HCT116 (cell line): ENCODE measurements at regions of chr5 and their contacts with region 1.

Region 1: DNA sequence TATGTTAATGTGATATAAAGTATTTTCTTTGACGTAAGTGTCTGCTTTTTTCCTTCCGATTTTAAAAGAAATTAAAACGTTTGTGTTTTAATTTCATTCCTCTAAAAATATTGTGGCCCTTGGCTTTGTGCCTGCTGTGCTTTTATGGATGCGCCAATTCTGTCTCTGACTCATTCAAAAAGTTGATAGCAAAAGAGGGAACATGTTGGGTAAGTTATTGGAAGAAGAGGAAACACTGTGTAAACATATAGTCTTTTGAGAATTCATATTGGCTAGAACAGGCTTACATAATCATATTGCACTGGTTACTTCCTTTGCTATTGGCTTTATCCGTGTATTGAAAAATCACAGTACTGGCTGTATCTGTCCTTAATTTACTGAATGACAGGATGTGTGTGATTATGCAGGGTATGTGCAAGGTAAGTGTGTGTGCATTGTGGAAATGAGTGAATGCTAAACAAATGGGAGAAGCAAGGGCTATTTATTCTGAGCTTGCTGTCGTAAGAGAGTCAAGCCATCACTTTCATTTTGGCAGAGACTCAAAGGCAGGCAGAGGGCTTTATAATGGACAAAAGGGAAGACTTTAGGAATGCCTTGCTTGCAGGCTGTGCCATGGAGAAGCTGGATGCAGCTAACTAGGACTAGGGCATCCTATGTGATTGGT is 67.8 kb downstream of the SGCD start:
- DNase-seq: no peak
- ATAC-seq: no peak
- H3K4me3 ChIP-seq: no peak overlapping the region
- H3K27ac ChIP-seq: no peak overlapping the region
- H3K4me1 ChIP-seq: no peaks in the 10 kb centered on the region
- H3K27me3 ChIP-seq: no peaks in the 10 kb centered on the region
- CTCF ChIP-seq: no peak
- POLR2A ChIP-seq: no peak
- RAD21 ChIP-seq: no peak

Region 2: GRCh38 chr5:156367597-156367996 is 27.2 kb before region 1 on chr5:
- CTCF ChIA-PET with region 1: no interaction called
- POLR2A ChIA-PET with region 1: no interaction called
- RAD21 ChIA-PET with region 1: no interaction called
- intact Hi-C with region 1: loop called (anchors 1 kb)
- DNase-seq: no peak
- ATAC-seq: no peak
- H3K4me3 ChIP-seq: no peak overlapping the region
- H3K27ac ChIP-seq: no peak overlapping the region
- H3K4me1 ChIP-seq: no peaks in the 10 kb centered on the region
- H3K27me3 ChIP-seq: no peaks in the 10 kb centered on the region
- CTCF ChIP-seq: no peak
- POLR2A ChIP-seq: no peak
- RAD21 ChIP-seq: no peak

Region 3: GRCh38 chr5:156405988-156406387 is 11.2 kb after region 1 on chr5:
- CTCF ChIA-PET with region 1: no interaction called
- POLR2A ChIA-PET with region 1: no interaction called
- RAD21 ChIA-PET with region 1: no interaction called
- intact Hi-C with region 1: no loop called
- DNase-seq: no peak
- ATAC-seq: no peak
- H3K4me3 ChIP-seq: no peak overlapping the region
- H3K27ac ChIP-seq: no peak overlapping the region
- H3K4me1 ChIP-seq: no peaks in the 10 kb centered on the region
- H3K27me3 ChIP-seq: no peaks in the 10 kb centered on the region
- CTCF ChIP-seq: no peak
- POLR2A ChIP-seq: no peak
- RAD21 ChIP-seq: no peak